B cell (primary cell): ENCODE measurements at regions of chrX and their contacts with region 1.

Region 1: GRCh38 chrX:48696301-48697181 is at the start of gene SUV39H1:
- DNase-seq: peak; percentile 89
- ATAC-seq: peak; percentile 95
- H3K4me3 ChIP-seq: peak within 1 kb of the TSS; percentile 13 to 63 (median 60)
- H3K4me3 Mint-ChIP-seq: peak within 1 kb of the TSS; percentile 92
- H3K27ac ChIP-seq: peak within 1 kb of the TSS; percentile 63 to 85
- H3K27ac Mint-ChIP-seq: peak within 1 kb of the TSS; percentile 93
- H3K4me1 ChIP-seq: peaks cover 7 to 16% of the 10 kb centered on the region in 2 donors
- H3K4me1 Mint-ChIP-seq: peaks cover 16% of the 10 kb centered on the region
- H3K27me3 ChIP-seq: no peaks in the 10 kb centered on the region
- H3K27me3 Mint-ChIP-seq: no peaks in the 10 kb centered on the region
- CTCF ChIP-seq: no peak
- total RNA-seq, gene SUV39H1: 8.9 and 9.5 TPM in 2 replicates

Region 2: GRCh38 chrX:48539345-48540027 is 157.1 kb before region 1 on chrX and contains the start of gene TBC1D25:
- CTCF ChIA-PET with region 1: no interaction called
- POLR2A ChIA-PET with region 1: no interaction called
- intact Hi-C with region 1: loop called (anchors 1 kb)
- DNase-seq: peak; percentile 97
- ATAC-seq: peak; percentile 79
- H3K4me3 ChIP-seq: peak within 1 kb of the TSS in 4 of 5 experiments; percentile 66 to 76 (median 74)
- H3K4me3 Mint-ChIP-seq: peak within 1 kb of the TSS; percentile 91
- H3K27ac ChIP-seq: peak within 1 kb of the TSS; percentile 94 to 97
- H3K27ac Mint-ChIP-seq: peak within 1 kb of the TSS; percentile 97
- H3K4me1 ChIP-seq: peaks cover 10 to 18% of the 10 kb centered on the region in 2 donors
- H3K4me1 Mint-ChIP-seq: peaks cover 20% of the 10 kb centered on the region
- H3K27me3 ChIP-seq: no peaks in the 10 kb centered on the region
- H3K27me3 Mint-ChIP-seq: no peaks in the 10 kb centered on the region
- CTCF ChIP-seq: peak; percentile 50
- total RNA-seq, gene TBC1D25: 24.6 and 25.2 TPM in 2 replicates

Region 3: DNA sequence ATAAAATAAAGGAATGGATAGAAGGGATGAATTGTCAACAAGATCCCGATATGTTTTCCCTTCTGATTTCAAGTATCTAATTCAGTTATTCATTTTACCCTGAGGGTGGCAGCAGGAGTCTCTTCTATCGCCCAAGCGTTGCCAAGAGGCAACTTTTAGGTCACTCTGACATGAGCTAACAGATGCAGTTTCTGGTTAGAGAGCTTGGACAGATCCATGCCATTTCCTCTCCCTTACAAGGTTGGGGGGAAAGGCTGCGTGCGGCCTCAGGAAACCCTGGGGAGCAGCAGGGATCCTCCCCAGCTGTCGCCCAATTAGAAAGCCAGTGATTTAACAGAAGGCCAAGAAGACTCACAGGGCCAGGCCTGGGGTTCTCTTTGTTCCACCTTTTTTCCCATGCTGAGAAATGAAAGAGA is 48.2 kb before region 1 on chrX:
- CTCF ChIA-PET with region 1: interaction called, 7 read pairs
- POLR2A ChIA-PET with region 1: no interaction called
- intact Hi-C with region 1: loop called (anchors 2 kb)
- DNase-seq: peak; percentile 60
- ATAC-seq: peak; percentile 73
- H3K4me3 ChIP-seq: no peak overlapping the region
- H3K4me3 Mint-ChIP-seq: no peak overlapping the region
- H3K27ac ChIP-seq: no peak overlapping the region
- H3K27ac Mint-ChIP-seq: peak overlapping the region; percentile 70
- H3K4me1 ChIP-seq: no peaks in the 10 kb centered on the region
- H3K4me1 Mint-ChIP-seq: no peaks in the 10 kb centered on the region
- H3K27me3 ChIP-seq: no peaks in the 10 kb centered on the region
- H3K27me3 Mint-ChIP-seq: no peaks in the 10 kb centered on the region
- CTCF ChIP-seq: peak; percentile 65

Region 4: DNA sequence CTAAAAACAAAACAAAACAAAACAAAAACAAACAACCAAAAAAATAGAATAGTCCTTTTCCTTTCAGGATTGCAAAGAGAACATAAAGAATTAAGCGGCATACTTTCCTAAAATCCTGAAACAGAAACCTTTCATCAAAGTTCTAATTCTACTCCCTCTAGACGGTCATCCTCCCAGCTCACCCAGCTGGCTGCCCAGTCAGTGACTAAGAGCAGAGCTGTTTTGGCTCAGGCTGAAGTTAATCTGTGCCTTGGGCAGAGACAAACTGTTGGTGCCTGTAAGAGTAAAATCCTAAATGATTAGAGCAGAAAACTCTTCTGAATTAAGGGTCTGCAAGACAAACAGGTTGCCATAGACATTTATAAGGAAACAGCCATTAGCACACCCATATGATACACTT is 30.6 kb before region 1 on chrX:
- CTCF ChIA-PET with region 1: no interaction called
- POLR2A ChIA-PET with region 1: no interaction called
- intact Hi-C with region 1: no loop called
- DNase-seq: no peak
- ATAC-seq: no peak
- H3K4me3 ChIP-seq: no peak overlapping the region
- H3K4me3 Mint-ChIP-seq: no peak overlapping the region
- H3K27ac ChIP-seq: no peak overlapping the region
- H3K27ac Mint-ChIP-seq: no peak overlapping the region
- H3K4me1 ChIP-seq: no peaks in the 10 kb centered on the region
- H3K4me1 Mint-ChIP-seq: no peaks in the 10 kb centered on the region
- H3K27me3 ChIP-seq: no peaks in the 10 kb centered on the region
- H3K27me3 Mint-ChIP-seq: no peaks in the 10 kb centered on the region
- CTCF ChIP-seq: no peak

Region 5: GRCh38 chrX:48683411-48683982 is 13.0 kb before region 1 on chrX and contains the start of gene WAS:
- CTCF ChIA-PET with region 1: interaction called, 4 read pairs
- POLR2A ChIA-PET with region 1: interaction called, 7 read pairs
- intact Hi-C with region 1: loop called (anchors 1 kb)
- DNase-seq: peak; percentile 72
- ATAC-seq: peak; percentile 90
- H3K4me3 ChIP-seq: peak within 1 kb of the TSS; percentile 54 to 76 (median 64)
- H3K4me3 Mint-ChIP-seq: peak within 1 kb of the TSS; percentile 87
- H3K27ac ChIP-seq: peak within 1 kb of the TSS; percentile 71 to 88
- H3K27ac Mint-ChIP-seq: peak within 1 kb of the TSS; percentile 95
- H3K4me1 ChIP-seq: peaks cover 26 to 40% of the 10 kb centered on the region in 2 donors
- H3K4me1 Mint-ChIP-seq: peaks cover 59% of the 10 kb centered on the region
- H3K27me3 ChIP-seq: no peaks in the 10 kb centered on the region
- H3K27me3 Mint-ChIP-seq: no peaks in the 10 kb centered on the region
- CTCF ChIP-seq: no peak
- total RNA-seq, gene WAS: 98.0 and 102 TPM in 2 replicates

Region 6: GRCh38 chrX:48770296-48770695 is 73.8 kb after region 1 on chrX:
- CTCF ChIA-PET with region 1: no interaction called
- POLR2A ChIA-PET with region 1: no interaction called
- intact Hi-C with region 1: no loop called
- DNase-seq: no peak
- ATAC-seq: no peak
- H3K4me3 ChIP-seq: no peak overlapping the region
- H3K4me3 Mint-ChIP-seq: no peak overlapping the region
- H3K27ac ChIP-seq: no peak overlapping the region
- H3K27ac Mint-ChIP-seq: no peak overlapping the region
- H3K4me1 ChIP-seq: no peaks in the 10 kb centered on the region
- H3K4me1 Mint-ChIP-seq: no peaks in the 10 kb centered on the region
- H3K27me3 ChIP-seq: no peaks in the 10 kb centered on the region
- H3K27me3 Mint-ChIP-seq: peaks cover 4% of the 10 kb centered on the region
- CTCF ChIP-seq: no peak

Region 7: GRCh38 chrX:48801280-48802088 is 104.9 kb after region 1 on chrX and contains the start of gene HDAC6:
- CTCF ChIA-PET with region 1: no interaction called
- POLR2A ChIA-PET with region 1: no interaction called
- intact Hi-C with region 1: loop called (anchors 1 kb)
- DNase-seq: peak; percentile 97
- ATAC-seq: peak; percentile 80
- H3K4me3 ChIP-seq: peak within 1 kb of the TSS; percentile 65 to 82 (median 76)
- H3K4me3 Mint-ChIP-seq: peak within 1 kb of the TSS; percentile 96
- H3K27ac ChIP-seq: peak within 1 kb of the TSS; percentile 95 to 96
- H3K27ac Mint-ChIP-seq: peak within 1 kb of the TSS; percentile 98
- H3K4me1 ChIP-seq: peaks cover 4 to 16% of the 10 kb centered on the region in 2 donors
- H3K4me1 Mint-ChIP-seq: peaks cover 14% of the 10 kb centered on the region
- H3K27me3 ChIP-seq: no peaks in the 10 kb centered on the region
- H3K27me3 Mint-ChIP-seq: no peaks in the 10 kb centered on the region
- CTCF ChIP-seq: no peak
- total RNA-seq, gene HDAC6: 168 and 170 TPM in 2 replicates

Region 8: GRCh38 chrX:48911412-48912182 is 215.1 kb after region 1 on chrX and contains the start of gene SLC35A2:
- CTCF ChIA-PET with region 1: interaction called, 3 read pairs
- POLR2A ChIA-PET with region 1: no interaction called
- intact Hi-C with region 1: loop called (anchors 1 kb)
- DNase-seq: peak; percentile 90
- ATAC-seq: peak; percentile 76
- H3K4me3 ChIP-seq: peak within 1 kb of the TSS; percentile 60 to 78 (median 66)
- H3K4me3 Mint-ChIP-seq: peak within 1 kb of the TSS; percentile 86
- H3K27ac ChIP-seq: peak within 1 kb of the TSS; percentile 86 to 90
- H3K27ac Mint-ChIP-seq: peak within 1 kb of the TSS; percentile 88
- H3K4me1 ChIP-seq: peaks cover 28 to 49% of the 10 kb centered on the region in 2 donors
- H3K4me1 Mint-ChIP-seq: peaks cover 48% of the 10 kb centered on the region
- H3K27me3 ChIP-seq: no peaks in the 10 kb centered on the region
- H3K27me3 Mint-ChIP-seq: no peaks in the 10 kb centered on the region
- CTCF ChIP-seq: no peak
- total RNA-seq, gene SLC35A2: 19.1 and 24.1 TPM in 2 replicates